PC-3 (cell line): ENCODE measurements at regions of chr10 and their contacts with region 1.

Region 1: DNA sequence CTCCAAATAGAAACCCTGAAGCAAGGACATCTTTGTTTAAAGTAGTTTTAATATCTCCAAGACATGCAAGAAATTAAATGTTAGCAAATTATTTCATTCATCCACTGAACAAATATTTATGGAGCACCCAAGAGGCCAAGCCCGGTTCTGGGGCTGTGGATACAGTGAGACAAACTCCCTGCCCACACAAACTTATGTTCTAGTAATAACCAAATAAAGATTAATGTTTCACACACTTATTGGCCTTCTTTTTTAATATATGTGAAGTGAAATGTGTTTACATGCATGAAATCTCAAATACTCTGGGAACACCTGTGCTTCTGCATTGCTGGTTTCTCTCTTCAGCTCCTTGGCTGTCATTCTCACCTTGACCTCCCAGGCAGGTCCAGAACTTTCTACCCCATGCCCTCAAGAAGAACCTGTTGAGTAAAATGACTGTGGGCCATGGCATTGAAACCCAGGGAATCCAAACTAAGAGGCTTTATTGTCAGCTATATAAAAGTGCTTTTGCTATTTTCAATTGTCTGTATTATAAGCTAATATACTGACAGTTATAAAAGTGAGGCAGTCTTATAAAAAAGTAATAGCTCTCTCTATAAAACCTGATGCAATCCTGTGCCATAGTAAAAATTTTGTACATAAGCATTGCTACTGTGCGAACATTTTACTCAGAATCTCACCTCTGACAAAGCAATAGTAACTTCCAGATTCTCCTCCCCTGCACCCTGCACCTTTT is 43.7 kb downstream of the SVIL start:
- DNase-seq: peak; percentile 4
- ATAC-seq: peak; percentile 61
- H3K4me3 ChIP-seq: no peak overlapping the region
- H3K27ac ChIP-seq: peak overlapping the region; percentile 96
- H3K4me1 ChIP-seq: peaks cover 37% of the 10 kb centered on the region
- H3K27me3 ChIP-seq: no peaks in the 10 kb centered on the region
- CTCF ChIP-seq: peak; percentile 2; the same call in 1 of the 2 replicates

Region 2: GRCh38 chr10:29517352-29517923 is 73.6 kb before region 1 on chr10:
- CTCF ChIA-PET with region 1: interaction called, 4 read pairs
- POLR2A ChIA-PET with region 1: no interaction called
- intact Hi-C with region 1: loop called (anchors 5 kb)
- DNase-seq: peak; percentile 56
- ATAC-seq: peak; percentile 54; the same call in 1 of the 2 replicates
- H3K4me3 ChIP-seq: no peak overlapping the region
- H3K27ac ChIP-seq: no peak overlapping the region
- H3K4me1 ChIP-seq: peaks cover 13% of the 10 kb centered on the region
- H3K27me3 ChIP-seq: no peaks in the 10 kb centered on the region
- CTCF ChIP-seq: peak; percentile 70

Region 3: GRCh38 chr10:29627201-29628141 is 36.4 kb after region 1 on chr10:
- CTCF ChIA-PET with region 1: interaction called, 3 read pairs
- POLR2A ChIA-PET with region 1: no interaction called
- intact Hi-C with region 1: loop called (anchors 2 kb)
- DNase-seq: peak; percentile 51
- ATAC-seq: peak; percentile 59
- H3K4me3 ChIP-seq: no peak overlapping the region
- H3K27ac ChIP-seq: peak overlapping the region; percentile 99
- H3K4me1 ChIP-seq: peaks cover 48% of the 10 kb centered on the region
- H3K27me3 ChIP-seq: no peaks in the 10 kb centered on the region
- CTCF ChIP-seq: no peak

Region 4: DNA sequence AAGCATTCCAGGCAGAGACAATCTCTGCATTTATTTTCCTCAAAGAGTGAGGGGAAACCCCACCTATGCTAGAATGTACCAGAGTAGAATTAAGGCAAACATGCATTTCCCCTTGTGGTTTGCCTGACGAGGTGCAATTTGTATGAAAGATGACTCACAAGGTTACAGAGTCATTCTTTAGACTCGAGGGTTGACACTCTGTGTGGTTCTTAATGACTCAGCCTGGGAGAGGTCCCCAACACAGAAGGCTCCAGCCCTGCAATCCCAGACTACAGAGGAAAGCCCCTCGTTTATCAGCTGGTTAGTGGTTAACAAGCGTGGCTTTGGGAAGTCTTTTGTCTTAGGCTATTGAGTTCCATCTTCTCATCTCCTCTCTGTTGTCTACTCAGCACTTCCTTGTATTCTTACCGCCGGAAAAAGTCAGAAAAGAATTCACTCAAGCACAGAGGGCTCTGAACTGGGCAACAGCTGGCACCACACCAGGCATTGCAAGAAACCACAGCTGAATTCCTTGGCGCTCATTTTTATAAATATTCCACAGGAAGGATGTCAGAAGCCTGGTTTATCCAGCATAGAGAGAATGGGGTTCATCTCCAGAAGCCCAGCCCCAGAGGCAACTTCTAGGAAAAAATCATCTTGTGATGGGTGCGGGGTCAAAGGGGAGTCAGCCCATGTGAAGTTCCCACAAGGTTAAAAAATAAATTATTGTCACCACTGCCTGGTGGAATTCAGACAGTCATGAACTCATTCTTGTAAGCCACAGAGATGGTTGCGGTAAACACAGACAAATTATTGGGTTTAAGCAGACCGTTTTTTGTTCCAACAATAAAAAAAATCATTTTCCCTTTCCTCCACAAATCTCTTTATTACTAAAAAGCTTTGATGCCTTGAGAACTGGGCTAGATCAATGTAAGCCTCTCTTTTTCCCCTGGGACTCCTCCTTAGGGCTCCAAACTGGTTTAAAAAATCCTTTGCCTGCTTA is 68.2 kb after region 1 on chr10:
- CTCF ChIA-PET with region 1: no interaction called
- POLR2A ChIA-PET with region 1: no interaction called
- intact Hi-C with region 1: loop called (anchors 2 kb)
- DNase-seq: peak; percentile 95
- ATAC-seq: peak; percentile 94
- H3K4me3 ChIP-seq: peak overlapping the region; percentile 30
- H3K27ac ChIP-seq: peak overlapping the region; percentile 94
- H3K4me1 ChIP-seq: peaks cover 42% of the 10 kb centered on the region
- H3K27me3 ChIP-seq: no peaks in the 10 kb centered on the region
- CTCF ChIP-seq: no peak

Region 5: GRCh38 chr10:29857843-29858701 is 267.0 kb after region 1 on chr10:
- CTCF ChIA-PET with region 1: no interaction called
- POLR2A ChIA-PET with region 1: no interaction called
- intact Hi-C with region 1: loop called (anchors 2 kb)
- DNase-seq: peak; percentile 81
- ATAC-seq: peak; percentile 57
- H3K4me3 ChIP-seq: peak overlapping the region; percentile 28; the same call in 1 of the 2 replicates
- H3K27ac ChIP-seq: peak overlapping the region; percentile 63
- H3K4me1 ChIP-seq: peaks cover 41% of the 10 kb centered on the region
- H3K27me3 ChIP-seq: no peaks in the 10 kb centered on the region
- CTCF ChIP-seq: peak; percentile 82